ENCODE measurements at regions of chr10 and their contacts with region 1.

Region 1: DNA sequence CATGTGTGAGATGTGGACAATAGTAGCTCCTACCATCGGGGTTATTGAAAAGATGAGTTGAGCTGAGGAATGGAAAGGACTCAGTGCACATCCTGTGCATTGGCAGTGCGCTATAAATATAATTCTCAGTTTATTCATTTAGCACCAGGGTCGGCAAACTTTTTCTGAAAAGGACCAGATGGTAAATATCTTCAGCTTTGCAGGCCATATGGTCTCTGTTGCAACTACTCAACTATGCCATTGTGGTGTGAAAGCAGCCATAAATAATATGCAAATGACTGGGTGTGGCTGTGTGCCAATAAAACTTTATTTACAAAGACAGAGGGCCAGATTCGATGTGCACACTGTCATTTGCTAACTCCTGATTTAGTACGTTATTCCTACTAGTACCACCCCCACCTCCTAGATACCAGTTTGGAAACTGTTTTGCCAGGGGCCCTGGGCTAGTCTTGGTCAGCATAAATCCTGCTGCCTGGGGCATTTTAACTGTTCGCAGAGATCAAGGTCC is 422.9 kb upstream of the MKI67 start:
- DNase-seq: no peak
- ATAC-seq: no peak
- H3K4me3 ChIP-seq: no peak overlapping the region
- H3K27ac ChIP-seq: no peak overlapping the region
- H3K4me1 ChIP-seq: no peaks in the 10 kb centered on the region
- H3K27me3 ChIP-seq: peaks cover 58% of the 10 kb centered on the region
- CTCF ChIP-seq: no peak
- POLR2A ChIP-seq: no peak
- RAD21 ChIP-seq: no peak

Region 2: DNA sequence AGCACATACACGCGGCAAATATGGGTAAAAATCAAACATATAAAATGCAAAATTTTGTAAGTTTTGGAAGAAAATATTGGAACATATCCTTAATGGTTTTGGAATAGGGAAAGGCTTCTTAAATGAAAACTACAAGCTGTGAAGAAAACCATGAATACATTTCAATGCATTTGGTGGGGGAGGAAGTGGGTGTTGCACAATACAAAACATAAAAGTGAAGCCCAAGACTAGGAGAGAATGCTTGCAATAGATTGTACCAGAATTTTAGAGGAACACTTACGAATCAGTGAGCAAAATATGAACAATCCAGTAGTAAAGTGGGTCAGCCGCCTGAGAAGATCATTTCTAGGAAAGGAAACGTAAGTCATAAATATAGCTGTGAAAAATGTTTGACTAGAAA is 100.4 kb before region 1 on chr10:
- CTCF ChIA-PET with region 1: no interaction called
- POLR2A ChIA-PET with region 1: no interaction called
- RAD21 ChIA-PET with region 1: no interaction called
- intact Hi-C with region 1: loop called (anchors 5 kb)
- DNase-seq: no peak
- ATAC-seq: no peak
- H3K4me3 ChIP-seq: no peak overlapping the region
- H3K27ac ChIP-seq: no peak overlapping the region
- H3K4me1 ChIP-seq: no peaks in the 10 kb centered on the region
- H3K27me3 ChIP-seq: peaks cover 42% of the 10 kb centered on the region
- CTCF ChIP-seq: no peak
- POLR2A ChIP-seq: no peak
- RAD21 ChIP-seq: no peak